Heart right ventricle (tissue), 16 donors: ENCODE measurements at regions of chr2 and their contacts with region 1.

Region 1: GRCh38 chr2:201383156-201383555 is 26.0 kb upstream of the FLACC1 start:
- DNase-seq: no peak
- ATAC-seq: peak in 2 of 8 donors; percentile 19 to 74
- H3K4me3 ChIP-seq: no peak overlapping the region
- H3K27ac ChIP-seq: no peak overlapping the region
- H3K4me1 ChIP-seq: no peaks in the 10 kb centered on the region
- H3K27me3 ChIP-seq: no peaks in the 10 kb centered on the region
- CTCF ChIP-seq: no peak

Region 2: DNA sequence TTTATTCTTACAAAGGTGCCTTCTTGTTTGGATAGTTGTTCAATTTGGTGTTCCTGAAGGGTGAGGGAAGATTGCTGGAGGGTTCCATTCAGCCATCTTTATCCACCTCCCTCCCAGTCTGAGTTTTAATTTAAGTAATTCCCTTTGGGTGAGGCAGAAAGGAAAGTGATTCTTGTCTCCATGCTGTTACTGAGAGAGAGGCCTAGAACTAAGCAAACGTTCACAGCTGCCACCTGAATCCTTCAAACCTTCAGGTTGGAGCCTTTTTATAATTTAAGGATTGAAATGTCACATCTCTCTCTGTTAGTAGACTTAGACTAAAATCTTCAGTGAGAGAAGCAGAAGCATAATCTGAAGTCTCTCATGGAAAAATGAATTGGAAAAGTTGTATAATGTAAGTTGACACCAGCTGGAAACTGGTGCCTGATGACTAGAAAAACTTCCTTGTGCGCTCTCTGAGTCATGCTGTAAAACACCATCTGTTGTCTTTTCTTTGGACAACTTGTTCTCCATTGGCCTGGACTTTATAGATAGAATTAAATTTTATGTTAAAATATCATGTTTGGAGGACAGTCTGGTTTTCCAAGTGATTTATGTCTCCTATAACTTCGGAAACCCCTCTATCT is 83.0 kb after region 1 on chr2:
- intact Hi-C with region 1: loop called in 1 of 10 experiments (anchors 5 kb)
- DNase-seq: no peak
- ATAC-seq: peak in 7 of 8 donors; percentile 64 to 81 (median 79)
- H3K4me3 ChIP-seq: no peak overlapping the region
- H3K27ac ChIP-seq: peak overlapping the region in 9 of 10 donors; percentile 25 to 75 (median 61)
- H3K4me1 ChIP-seq: peaks cover 0 to 22% (median 11%) of the 10 kb centered on the region in 9 donors
- H3K27me3 ChIP-seq: no peaks in the 10 kb centered on the region
- CTCF ChIP-seq: no peak

Region 3: DNA sequence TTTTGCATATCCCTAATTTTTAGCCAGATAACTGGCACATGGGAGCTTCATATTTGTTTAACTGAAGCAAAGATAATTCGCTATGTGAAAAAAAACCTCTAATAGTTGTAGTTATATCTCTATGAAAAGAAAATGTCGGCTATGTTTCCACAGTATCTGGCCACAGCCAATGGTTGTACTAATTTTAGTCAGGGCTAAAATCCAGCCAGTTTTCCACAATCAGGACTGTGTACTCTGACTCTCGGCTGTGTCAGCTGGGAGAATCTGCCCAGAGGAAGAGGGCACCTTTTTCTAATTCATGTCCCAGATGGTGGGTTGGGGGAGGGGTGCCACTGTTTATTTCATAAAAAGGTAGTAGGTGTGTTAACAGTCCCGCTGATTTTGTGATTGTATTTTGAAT is 107.1 kb after region 1 on chr2:
- intact Hi-C with region 1: no loop called
- DNase-seq: no peak
- ATAC-seq: peak in 3 of 8 donors; percentile 44 to 62 (median 56)
- H3K4me3 ChIP-seq: no peak overlapping the region
- H3K27ac ChIP-seq: no peak overlapping the region
- H3K4me1 ChIP-seq: no peaks in the 10 kb centered on the region
- H3K27me3 ChIP-seq: no peaks in the 10 kb centered on the region
- CTCF ChIP-seq: no peak

Region 4: GRCh38 chr2:201733544-201733943 is 350.4 kb after region 1 on chr2:
- intact Hi-C with region 1: loop called in 1 of 10 experiments (anchors 10 kb)
- DNase-seq: no peak
- ATAC-seq: no peak
- H3K4me3 ChIP-seq: no peak overlapping the region
- H3K27ac ChIP-seq: no peak overlapping the region
- H3K4me1 ChIP-seq: no peaks in the 10 kb centered on the region
- H3K27me3 ChIP-seq: no peaks in the 10 kb centered on the region
- CTCF ChIP-seq: no peak

Region 5: GRCh38 chr2:201746551-201746950 is 363.4 kb after region 1 on chr2:
- intact Hi-C with region 1: loop called in 1 of 10 experiments (anchors 10 kb)
- DNase-seq: no peak
- ATAC-seq: no peak
- H3K4me3 ChIP-seq: no peak overlapping the region
- H3K27ac ChIP-seq: no peak overlapping the region
- H3K4me1 ChIP-seq: no peaks in the 10 kb centered on the region
- H3K27me3 ChIP-seq: no peaks in the 10 kb centered on the region
- CTCF ChIP-seq: no peak